ENCODE measurements at regions of chr7 and their contacts with region 1.

Region 1: GRCh38 chr7:133099633-133100286 is 17.9 kb upstream of the CHCHD3 start:
- DNase-seq: no peak

Region 2: DNA sequence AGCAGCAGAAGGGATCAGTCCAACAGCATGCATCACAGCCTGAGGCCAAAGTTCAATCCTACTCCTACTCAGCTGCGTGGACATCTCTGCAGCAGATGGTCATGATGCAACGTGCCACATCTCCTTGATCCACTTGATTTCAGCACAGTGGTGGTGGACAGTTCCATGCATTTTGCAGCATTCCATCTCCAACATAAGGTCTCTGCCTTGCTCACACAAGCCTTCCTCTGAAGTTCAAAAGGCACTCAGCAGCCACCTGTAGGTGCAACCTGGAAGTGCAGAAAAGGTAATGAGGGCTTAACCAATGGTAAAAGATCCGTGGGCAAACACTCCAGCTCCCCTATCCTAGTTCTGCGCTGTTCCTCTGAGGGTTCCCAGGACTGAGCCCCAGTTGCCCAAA is 39.6 kb after region 1 on chr7:
- intact Hi-C with region 1: loop called in 1 of 2 experiments (anchors 2 kb)
- DNase-seq: no peak